ENCODE measurements at regions of chr19 and their contacts with region 1.

Region 1: GRCh38 chr19:15379083-15379995 is at the start of gene AKAP8:
- DNase-seq: peak; percentile 97 to 99
- ATAC-seq: peak; percentile 84 to 85
- H3K4me3 ChIP-seq: peak within 1 kb of the TSS; percentile 84 to 100 (median 88)
- H3K27ac ChIP-seq: peak within 1 kb of the TSS; percentile 92 to 99 (median 96)
- H3K4me1 ChIP-seq: peaks cover 38 to 39% of the 10 kb centered on the region in 2 donors
- H3K27me3 ChIP-seq: no peaks in the 10 kb centered on the region
- CTCF ChIP-seq: no peak
- POLR2A ChIP-seq: peak; percentile 67 to 78
- total RNA-seq, gene AKAP8: 26.0 to 41.5 (median 27.5) TPM

Region 2: DNA sequence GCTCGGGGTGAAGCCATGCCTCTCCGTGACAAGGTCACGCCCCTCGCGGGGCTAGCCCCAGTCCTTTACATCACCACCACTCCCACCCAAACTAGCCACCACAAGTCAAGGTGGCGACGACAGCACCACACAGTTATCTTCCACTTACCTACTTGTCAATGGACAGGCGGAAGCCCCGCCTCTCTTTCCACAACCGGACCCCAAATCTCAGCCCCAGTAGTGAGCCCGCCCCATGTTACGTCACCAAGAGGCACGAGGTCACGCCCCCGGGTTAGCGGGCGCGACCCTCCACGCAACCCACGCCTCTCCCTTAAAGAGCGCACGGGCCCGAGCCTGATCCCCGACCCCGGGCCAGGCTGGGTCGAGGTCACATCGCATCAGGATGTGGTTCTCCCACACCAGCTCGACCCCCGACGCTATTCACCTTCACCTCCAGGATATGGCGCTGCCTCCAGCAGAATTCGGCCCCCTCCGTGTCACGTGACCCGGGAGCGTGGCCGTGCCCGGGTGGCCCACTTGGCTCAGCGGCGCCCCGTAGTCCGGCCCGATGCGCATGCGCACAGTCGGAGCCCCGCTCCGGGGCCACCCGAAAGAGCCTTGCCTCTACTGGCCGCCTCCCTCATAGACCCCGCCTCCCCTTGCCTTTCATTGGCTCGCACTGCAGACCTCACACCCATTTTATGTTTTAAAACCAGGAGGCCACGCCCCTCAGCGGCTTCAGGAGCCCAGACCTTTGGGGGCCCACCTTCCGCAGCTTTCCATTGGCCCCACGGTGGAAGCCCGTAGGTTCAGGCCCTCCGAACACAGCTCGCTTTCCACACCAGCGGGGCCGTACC is 253.9 kb before region 1 on chr19:
- in situ Hi-C with region 1: no loop called
- intact Hi-C with region 1: no loop called
- DNase-seq: peak; percentile 95 to 98
- ATAC-seq: peak; percentile 94 to 95
- H3K4me3 ChIP-seq: peak overlapping the region; percentile 78 to 85 (median 84)
- H3K27ac ChIP-seq: peak overlapping the region; percentile 89 to 95 (median 93)
- H3K4me1 ChIP-seq: peaks cover 13 to 15% of the 10 kb centered on the region in 2 donors
- H3K27me3 ChIP-seq: no peaks in the 10 kb centered on the region
- CTCF ChIP-seq: peak in 2 of 5 experiments; percentile 35 to 48
- POLR2A ChIP-seq: peak; percentile 40 to 42

Region 3: DNA sequence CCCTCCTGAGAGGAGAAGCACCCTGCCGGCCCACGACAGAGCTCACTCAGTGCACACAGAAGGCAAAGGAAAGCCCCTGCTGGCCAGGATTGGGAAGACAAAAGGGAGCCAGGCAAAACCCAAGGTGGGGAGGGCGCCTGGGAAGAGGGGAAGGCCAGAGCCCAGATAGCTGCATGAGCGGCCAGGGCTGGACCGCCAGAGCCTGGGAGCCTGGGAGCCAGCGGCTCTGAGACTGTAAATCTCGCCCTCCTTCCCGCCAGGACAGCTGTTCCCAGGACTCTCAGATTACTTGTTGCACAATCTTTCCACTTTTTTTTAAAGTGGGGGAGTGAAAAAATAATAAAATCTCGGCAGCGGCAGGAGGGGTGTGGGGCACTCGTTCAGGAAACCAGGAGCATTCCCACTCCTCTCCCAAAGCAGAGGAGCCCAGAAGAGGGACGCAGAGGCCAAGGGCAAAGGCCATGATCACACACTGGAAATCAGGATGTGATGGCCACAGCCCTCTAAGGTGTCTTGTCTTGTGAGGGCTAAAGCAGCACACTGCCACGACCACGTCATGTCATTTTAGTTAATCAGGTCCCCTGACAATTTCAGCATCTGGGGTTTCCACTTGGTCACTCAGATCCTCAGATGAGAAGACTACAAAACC is 127.5 kb before region 1 on chr19:
- in situ Hi-C with region 1: loop called in 1 of 4 experiments (anchors 25 kb)
- intact Hi-C with region 1: loop called (anchors 2 kb)
- DNase-seq: peak; percentile 79 to 95
- ATAC-seq: peak; percentile 73 to 77
- H3K4me3 ChIP-seq: peak overlapping the region in 3 of 4 donors; percentile 24 to 45 (median 34)
- H3K27ac ChIP-seq: peak overlapping the region; percentile 84 to 96 (median 90)
- H3K4me1 ChIP-seq: peaks cover 70 to 71% of the 10 kb centered on the region in 2 donors
- H3K27me3 ChIP-seq: no peaks in the 10 kb centered on the region
- CTCF ChIP-seq: peak; percentile 41 to 67 (median 54)
- POLR2A ChIP-seq: peak in 1 of 2 donors; percentile 25

Region 4: GRCh38 chr19:15332311-15332996 is 46.9 kb before region 1 on chr19 and contains the start of gene BRD4:
- in situ Hi-C with region 1: no loop called
- intact Hi-C with region 1: loop called (anchors 2 kb)
- DNase-seq: peak; percentile 38 to 62
- ATAC-seq: peak; percentile 63 to 72
- H3K4me3 ChIP-seq: peak within 1 kb of the TSS; percentile 82 to 97 (median 96)
- H3K27ac ChIP-seq: peak within 1 kb of the TSS; percentile 91 to 98 (median 96)
- H3K4me1 ChIP-seq: peaks cover 66 to 70% of the 10 kb centered on the region in 2 donors
- H3K27me3 ChIP-seq: no peaks in the 10 kb centered on the region
- CTCF ChIP-seq: no peak
- POLR2A ChIP-seq: peak; percentile 72 to 78
- total RNA-seq, gene BRD4: 64.8 to 83.2 (median 73.9) TPM

Region 5: DNA sequence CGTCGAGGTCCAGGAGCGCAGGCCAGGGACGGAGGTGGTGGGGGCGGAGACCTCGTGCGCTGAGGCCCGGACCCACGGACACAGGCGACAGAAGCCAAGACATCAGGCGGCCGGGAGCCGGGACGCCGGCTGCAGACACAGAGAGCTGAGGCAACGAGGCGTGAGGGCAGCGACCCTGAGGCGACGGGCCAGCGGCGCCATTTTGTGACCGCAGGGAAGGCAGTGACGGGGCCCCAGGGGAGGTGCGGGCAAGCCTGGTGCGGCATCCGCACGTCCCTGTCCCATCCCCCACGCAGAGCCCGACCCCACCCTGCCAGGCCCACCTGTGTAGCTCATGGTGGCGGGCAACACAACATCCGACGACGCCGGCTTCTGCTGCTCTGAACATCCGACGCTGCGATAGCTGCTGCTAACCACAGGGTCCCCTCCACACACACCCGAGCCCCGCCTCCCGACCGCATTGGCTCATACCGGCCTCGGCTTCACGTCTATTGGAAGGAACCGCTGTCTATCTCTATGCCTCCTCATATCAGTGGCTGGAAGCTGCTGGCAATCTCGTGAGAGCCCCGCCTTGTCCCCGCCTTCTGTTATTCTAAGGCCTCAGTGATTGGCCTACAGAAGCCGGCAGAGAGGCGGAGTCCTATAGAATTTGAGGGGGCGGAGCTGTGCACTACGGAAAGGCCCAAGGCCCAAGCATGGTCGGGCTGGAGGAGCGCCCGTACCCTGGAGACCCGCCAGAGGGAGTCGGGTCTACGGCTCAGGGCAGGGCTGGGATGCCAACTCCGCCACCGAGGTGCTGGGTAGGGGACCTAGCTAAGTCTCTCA is 39.5 kb after region 1 on chr19 and contains the start of gene AKAP8L:
- in situ Hi-C with region 1: no loop called
- intact Hi-C with region 1: loop called (anchors 1 kb)
- DNase-seq: peak; percentile 100
- ATAC-seq: peak; percentile 94 to 95
- H3K4me3 ChIP-seq: peak within 1 kb of the TSS; percentile 78 to 93 (median 90)
- H3K27ac ChIP-seq: peak within 1 kb of the TSS; percentile 91 to 97 (median 96)
- H3K4me1 ChIP-seq: peaks cover 54 to 60% of the 10 kb centered on the region in 2 donors
- H3K27me3 ChIP-seq: no peaks in the 10 kb centered on the region
- CTCF ChIP-seq: peak; percentile 42 to 64 (median 59)
- POLR2A ChIP-seq: peak; percentile 98 to 99
- total RNA-seq, gene AKAP8L: 69.3 to 142 (median 85.6) TPM

Region 6: GRCh38 chr19:15449620-15450527 is 70.5 kb after region 1 on chr19 and contains the start of gene WIZ:
- in situ Hi-C with region 1: no loop called
- intact Hi-C with region 1: loop called (anchors 2 kb)
- DNase-seq: peak; percentile 59 to 84
- ATAC-seq: peak; percentile 32 to 34
- H3K4me3 ChIP-seq: peak within 1 kb of the TSS; percentile 69 to 84 (median 79)
- H3K27ac ChIP-seq: peak within 1 kb of the TSS; percentile 87 to 99 (median 98)
- H3K4me1 ChIP-seq: peaks cover 30% of the 10 kb centered on the region in 2 donors
- H3K27me3 ChIP-seq: peaks cover 0 to under 1% (median 0%) of the 10 kb centered on the region in 3 donors
- CTCF ChIP-seq: no peak
- POLR2A ChIP-seq: peak; percentile 64 to 67
- total RNA-seq, gene WIZ: 28.0 to 40.6 (median 32.5) TPM